Activated B cell treated with CpG ODN at 0.5 μM for 24 hours (primary cell): ENCODE measurements at regions of chr6 and their contacts with region 1.

Region 1: DNA sequence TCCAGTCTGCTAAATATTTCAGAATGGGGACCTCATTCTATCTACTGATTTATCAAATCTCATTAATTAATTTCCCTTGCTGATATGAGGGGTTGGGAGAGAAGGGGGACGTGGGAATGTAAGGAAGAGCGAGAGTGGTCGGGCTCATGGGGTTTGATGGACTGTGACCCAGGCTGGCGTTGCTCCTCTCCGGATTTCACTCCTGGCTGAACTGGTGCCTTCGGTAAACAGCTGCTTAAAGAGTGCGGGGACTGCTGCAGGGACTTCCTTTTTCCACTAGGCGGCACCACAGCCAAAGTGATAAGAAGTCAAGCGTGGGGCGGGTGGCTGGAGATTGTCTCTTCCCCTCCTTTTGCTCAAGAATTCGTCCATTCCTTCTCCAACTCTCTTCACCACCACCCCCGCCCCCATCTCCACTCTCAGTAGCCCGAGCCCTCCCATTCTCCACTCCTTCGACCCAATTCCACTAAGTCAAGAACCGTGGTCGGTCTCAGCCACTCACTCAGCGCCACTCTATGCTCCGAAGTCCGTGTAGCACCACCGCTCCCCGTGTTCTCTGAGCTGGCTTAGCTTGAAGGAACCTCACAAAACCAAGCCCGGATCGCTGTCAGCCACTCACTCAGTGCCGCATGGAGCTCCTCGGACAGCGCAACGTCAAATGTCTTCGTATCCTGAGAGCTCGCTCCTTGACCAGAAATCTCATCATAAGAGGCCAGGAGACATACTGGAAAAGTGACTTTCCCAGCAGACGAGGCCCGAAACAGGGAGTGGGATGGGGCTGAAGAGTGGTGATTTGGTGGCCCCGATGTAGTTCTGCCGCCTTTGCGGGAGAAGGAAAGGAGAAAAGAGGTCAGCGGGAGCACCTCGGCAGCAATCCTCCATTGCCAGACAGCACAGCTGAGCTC is 9.7 kb downstream of the TRIM31 start:
- DNase-seq: peak; percentile 68
- ATAC-seq: peak; percentile 83
- H3K4me3 Mint-ChIP-seq: peak overlapping the region; percentile 89
- H3K27ac Mint-ChIP-seq: peak overlapping the region; percentile 70
- H3K4me1 Mint-ChIP-seq: peaks cover 38% of the 10 kb centered on the region
- H3K27me3 Mint-ChIP-seq: peaks cover 47% of the 10 kb centered on the region
- CTCF ChIP-seq: peak; percentile 41

Region 2: GRCh38 chr6:30006170-30007131 is 96.8 kb before region 1 on chr6:
- CTCF ChIA-PET with region 1: no interaction called
- POLR2A ChIA-PET with region 1: no interaction called
- intact Hi-C with region 1: no loop called
- DNase-seq: no peak
- ATAC-seq: peak; percentile 45
- H3K4me3 Mint-ChIP-seq: peak overlapping the region; percentile 84
- H3K27ac Mint-ChIP-seq: no peak overlapping the region
- H3K4me1 Mint-ChIP-seq: peaks cover 19% of the 10 kb centered on the region
- H3K27me3 Mint-ChIP-seq: peaks cover 20% of the 10 kb centered on the region
- CTCF ChIP-seq: no peak

Region 3: GRCh38 chr6:30066577-30067459 is 36.4 kb before region 1 on chr6 and contains the start of gene PPP1R11:
- CTCF ChIA-PET with region 1: interaction called, 9 read pairs
- POLR2A ChIA-PET with region 1: interaction called, 20 read pairs
- intact Hi-C with region 1: loop called (anchors 1 kb)
- DNase-seq: peak; percentile 95
- ATAC-seq: peak; percentile 96
- H3K4me3 Mint-ChIP-seq: peak within 1 kb of the TSS; percentile 98
- H3K27ac Mint-ChIP-seq: peak within 1 kb of the TSS; percentile 99
- H3K4me1 Mint-ChIP-seq: peaks cover 60% of the 10 kb centered on the region
- H3K27me3 Mint-ChIP-seq: peaks cover 17% of the 10 kb centered on the region
- CTCF ChIP-seq: no peak
- total RNA-seq, gene PPP1R11: 43.0 and 43.1 TPM in 2 replicates

Region 4: GRCh38 chr6:30169658-30170614 is 66.7 kb after region 1 on chr6:
- CTCF ChIA-PET with region 1: no interaction called
- POLR2A ChIA-PET with region 1: no interaction called
- intact Hi-C with region 1: loop called (anchors 1 kb)
- DNase-seq: no peak
- ATAC-seq: peak; percentile 71
- H3K4me3 Mint-ChIP-seq: no peak overlapping the region
- H3K27ac Mint-ChIP-seq: no peak overlapping the region
- H3K4me1 Mint-ChIP-seq: peaks cover 8% of the 10 kb centered on the region
- H3K27me3 Mint-ChIP-seq: peaks cover 52% of the 10 kb centered on the region
- CTCF ChIP-seq: no peak

Region 5: GRCh38 chr6:30326526-30327260 is 223.5 kb after region 1 on chr6 and contains the start of gene TRIM39:
- CTCF ChIA-PET with region 1: no interaction called
- POLR2A ChIA-PET with region 1: no interaction called
- intact Hi-C with region 1: loop called (anchors 1 kb)
- DNase-seq: peak; percentile 90
- ATAC-seq: peak; percentile 68
- H3K4me3 Mint-ChIP-seq: peak within 1 kb of the TSS; percentile 96
- H3K27ac Mint-ChIP-seq: peak within 1 kb of the TSS; percentile 99
- H3K4me1 Mint-ChIP-seq: peaks cover 57% of the 10 kb centered on the region
- H3K27me3 Mint-ChIP-seq: no peaks in the 10 kb centered on the region
- CTCF ChIP-seq: no peak
- total RNA-seq, gene TRIM39: 21.6 and 22.0 TPM in 2 replicates